ENCODE measurements at regions of chr13 and their contacts with region 1.

Region 1: DNA sequence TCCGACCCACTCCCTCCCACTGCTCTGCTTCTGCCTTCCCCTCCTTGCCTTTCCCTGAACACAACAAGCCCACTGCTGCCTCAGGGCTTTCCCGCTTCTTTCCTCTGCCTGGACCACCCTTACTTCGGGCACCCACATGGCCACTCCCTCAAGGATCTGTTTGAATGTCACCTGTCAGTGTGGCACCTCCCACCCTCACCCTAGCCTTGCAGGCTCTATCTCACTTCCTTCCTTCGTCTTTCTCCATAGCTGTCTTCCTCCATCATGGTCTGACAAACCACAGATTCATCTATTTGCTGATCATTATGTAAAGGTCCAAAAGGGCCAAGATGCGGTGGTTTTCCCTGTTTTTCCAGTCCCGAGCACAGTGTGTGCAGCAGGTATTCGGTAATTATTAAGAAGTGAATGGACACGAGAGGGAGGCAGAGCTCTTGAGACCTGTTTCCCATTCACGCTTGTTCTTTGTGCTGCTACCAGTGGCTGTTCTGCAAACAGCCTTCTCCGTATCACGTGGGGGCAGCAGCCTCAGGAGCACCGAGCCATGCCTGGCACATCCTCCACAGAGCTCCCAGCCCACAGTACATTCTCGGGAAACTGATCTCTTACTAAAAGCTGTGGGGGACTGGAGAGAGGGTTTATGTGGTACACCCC is 50.2 kb downstream of the CCDC70 start:
- DNase-seq: peak in 1 of 3 donors; percentile 36
- H3K4me3 ChIP-seq: no peak overlapping the region
- H3K27ac ChIP-seq: no peak overlapping the region
- H3K4me1 ChIP-seq: peaks cover 0 to 34% (median 19%) of the 10 kb centered on the region in 4 experiments
- H3K27me3 ChIP-seq: no peaks in the 10 kb centered on the region

Region 2: GRCh38 chr13:51881296-51881695 is 30.7 kb before region 1 on chr13:
- CTCF ChIA-PET with region 1: no interaction called
- POLR2A ChIA-PET with region 1: no interaction called
- DNase-seq: peak in 2 of 3 donors; percentile 30 to 48
- H3K4me3 ChIP-seq: no peak overlapping the region
- H3K27ac ChIP-seq: no peak overlapping the region
- H3K4me1 ChIP-seq: no peaks in the 10 kb centered on the region
- H3K27me3 ChIP-seq: no peaks in the 10 kb centered on the region

Region 3: DNA sequence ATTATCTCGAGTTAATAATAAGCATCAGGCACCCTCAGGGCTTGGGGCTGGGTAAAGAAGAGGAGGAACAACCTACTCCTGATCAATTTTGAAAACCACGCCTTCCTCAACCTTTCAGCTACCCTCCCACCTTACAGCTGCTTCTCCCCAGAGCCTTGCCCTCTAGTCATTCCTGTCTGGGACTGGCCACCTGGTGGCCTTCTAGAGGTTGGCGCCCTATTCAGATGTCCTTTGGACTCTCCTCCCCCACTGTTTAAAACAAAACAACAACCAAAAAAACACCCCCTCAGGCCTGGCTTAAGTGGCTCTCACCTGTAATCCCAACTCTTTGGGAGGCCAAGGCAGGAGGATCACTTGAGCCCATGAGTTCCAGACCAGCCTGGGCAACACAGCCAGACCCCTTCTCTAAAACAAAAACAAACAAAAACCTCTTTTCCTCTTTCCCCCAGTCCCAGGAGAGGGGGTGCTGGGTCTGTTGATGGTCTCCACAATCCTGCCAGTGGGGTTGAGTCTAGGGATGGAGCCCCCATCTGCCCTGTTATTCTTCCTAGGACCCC is 12.1 kb after region 1 on chr13:
- CTCF ChIA-PET with region 1: interaction called, 29 read pairs
- POLR2A ChIA-PET with region 1: no interaction called
- DNase-seq: peak; percentile 17 to 65 (median 28)
- H3K4me3 ChIP-seq: no peak overlapping the region
- H3K27ac ChIP-seq: no peak overlapping the region
- H3K4me1 ChIP-seq: no peaks in the 10 kb centered on the region
- H3K27me3 ChIP-seq: no peaks in the 10 kb centered on the region